ENCODE measurements at regions of chr2 and their contacts with region 1.

Region 1: DNA sequence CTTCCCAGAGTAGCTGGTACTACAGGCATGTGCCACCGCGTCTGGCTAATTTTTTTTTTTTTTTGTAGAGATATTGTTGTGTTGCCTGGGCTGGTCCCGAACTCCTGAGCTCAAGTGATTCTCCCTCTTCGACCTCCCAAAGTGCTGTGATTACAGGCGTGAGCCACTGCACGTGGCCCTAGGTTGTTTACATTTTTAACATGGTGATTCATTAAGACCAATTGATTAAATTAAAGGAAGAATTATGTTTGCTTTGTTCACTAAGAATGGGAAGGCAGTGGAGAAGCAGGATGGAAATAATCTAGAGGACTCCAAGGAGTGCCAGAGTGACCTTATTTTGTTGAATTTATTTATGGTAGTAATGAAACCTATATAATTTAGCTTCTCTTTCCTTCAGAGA is 7.5 kb downstream of the LCLAT1 start:
- DNase-seq: no peak
- ATAC-seq: no peak
- H3K4me3 ChIP-seq: no peak overlapping the region
- H3K27ac ChIP-seq: peak overlapping the region in 4 of 10 donors; percentile 1 to 45 (median 19)
- H3K4me1 ChIP-seq: peaks cover 0 to 61% (median 19%) of the 10 kb centered on the region in 9 donors
- H3K27me3 ChIP-seq: no peaks in the 10 kb centered on the region
- CTCF ChIP-seq: no peak

Region 2: DNA sequence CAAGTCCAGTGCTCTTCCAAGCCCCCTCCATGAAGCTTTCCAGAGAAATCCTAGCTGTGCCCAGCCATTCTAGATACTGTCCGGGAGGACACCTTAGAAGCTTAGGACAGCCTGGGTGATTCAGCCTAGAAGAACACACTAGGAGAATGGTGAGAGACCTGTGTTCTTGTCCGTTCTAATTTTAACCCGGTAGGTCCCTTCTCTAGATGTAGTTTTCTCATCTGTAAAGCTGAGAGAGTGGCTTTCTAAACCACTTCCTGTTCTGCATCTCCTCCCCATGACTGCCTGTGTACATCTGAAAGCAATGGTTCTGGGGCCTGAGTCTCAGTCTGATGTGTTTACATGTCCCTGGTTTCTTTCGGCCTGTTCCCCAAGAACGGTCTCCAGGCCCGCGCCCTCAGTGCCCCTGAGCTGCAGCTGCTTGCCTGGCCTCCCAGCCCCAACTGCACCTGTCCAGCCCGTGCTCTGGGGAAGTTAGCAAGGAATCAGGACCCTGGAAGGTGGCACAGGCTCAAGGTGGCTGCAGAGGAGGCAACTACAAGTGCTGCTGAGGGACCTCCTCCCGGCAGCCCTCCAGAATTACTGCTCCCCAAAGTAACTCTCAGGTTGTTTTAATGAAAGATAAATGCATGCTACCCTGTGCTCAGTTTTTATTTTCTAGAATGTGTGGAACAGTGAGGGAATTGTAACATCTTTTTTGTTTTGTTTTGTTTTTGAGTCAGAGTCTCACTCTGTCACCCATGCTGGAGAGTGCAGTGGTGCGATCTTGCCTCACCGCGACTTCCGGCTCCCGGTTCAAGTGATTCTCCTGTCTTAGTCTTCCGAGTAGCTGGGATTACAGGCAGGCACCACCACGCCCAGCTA is 117.4 kb before region 1 on chr2:
- intact Hi-C with region 1: loop called in 2 of 10 experiments (anchors 10 kb)
- DNase-seq: no peak
- ATAC-seq: no peak
- H3K4me3 ChIP-seq: no peak overlapping the region
- H3K27ac ChIP-seq: peak overlapping the region in 2 of 10 donors; percentile 21 to 73
- H3K4me1 ChIP-seq: peaks cover 7 to 50% (median 39%) of the 10 kb centered on the region in 9 donors
- H3K27me3 ChIP-seq: no peaks in the 10 kb centered on the region
- CTCF ChIP-seq: no peak

Region 3: GRCh38 chr2:30569946-30570345 is 115.4 kb after region 1 on chr2:
- intact Hi-C with region 1: no loop called
- DNase-seq: no peak
- ATAC-seq: no peak
- H3K4me3 ChIP-seq: no peak overlapping the region
- H3K27ac ChIP-seq: no peak overlapping the region
- H3K4me1 ChIP-seq: peaks cover 0 to 23% (median 7%) of the 10 kb centered on the region in 9 donors
- H3K27me3 ChIP-seq: no peaks in the 10 kb centered on the region
- CTCF ChIP-seq: no peak